K562 (cell line): ENCODE measurements at regions of chr17 and their contacts with region 1.

Region 1: GRCh38 chr17:27601069-27601975 is 29.7 kb upstream of the LGALS9 start:
- DNase-seq: peak; percentile 68 to 88 (median 74)
- ATAC-seq: peak; percentile 48
- H3K4me3 ChIP-seq: no peak overlapping the region
- H3K27ac ChIP-seq: peak overlapping the region; percentile 92
- H3K4me1 ChIP-seq: peaks cover 38 to 48% of the 10 kb centered on the region in 2 experiments
- H3K27me3 ChIP-seq: no peaks in the 10 kb centered on the region
- CTCF ChIP-seq: peak; percentile 87 to 95 (median 94)
- EP300 ChIP-seq: peak; percentile 34; the same call in 1 of the 2 replicates
- POLR2A ChIP-seq: no peak
- RAD21 ChIP-seq: peak; percentile 89 to 91

Region 2: GRCh38 chr17:27236717-27237315 is 364.5 kb before region 1 on chr17:
- CTCF ChIA-PET with region 1: interaction called, 60 read pairs
- POLR2A ChIA-PET with region 1: no interaction called
- in situ Hi-C with region 1: loop called (anchors 10 kb)
- intact Hi-C with region 1: no loop called
- DNase-seq: peak; percentile 69 to 80 (median 74)
- ATAC-seq: peak; percentile 81
- H3K4me3 ChIP-seq: no peak overlapping the region
- H3K27ac ChIP-seq: no peak overlapping the region
- H3K4me1 ChIP-seq: peaks cover 0 to 4% of the 10 kb centered on the region in 2 experiments; a peak in 2 of 5 replicates
- H3K27me3 ChIP-seq: no peaks in the 10 kb centered on the region
- CTCF ChIP-seq: peak; percentile 79 to 91 (median 84)
- EP300 ChIP-seq: no peak
- POLR2A ChIP-seq: no peak
- RAD21 ChIP-seq: peak; percentile 91 to 93

Region 3: GRCh38 chr17:27353461-27354050 is 247.8 kb before region 1 on chr17:
- CTCF ChIA-PET with region 1: interaction called, 27 read pairs
- POLR2A ChIA-PET with region 1: interaction called, 6 read pairs
- in situ Hi-C with region 1: no loop called
- intact Hi-C with region 1: loop called (anchors 1 kb)
- DNase-seq: peak; percentile 97
- ATAC-seq: peak; percentile 92
- H3K4me3 ChIP-seq: peak overlapping the region; percentile 79
- H3K27ac ChIP-seq: peak overlapping the region; percentile 98
- H3K4me1 ChIP-seq: peaks cover 33 to 35% of the 10 kb centered on the region in 2 experiments
- H3K27me3 ChIP-seq: no peaks in the 10 kb centered on the region
- CTCF ChIP-seq: peak; percentile 82 to 97 (median 93)
- EP300 ChIP-seq: peak; percentile 81
- POLR2A ChIP-seq: peak; percentile 91
- RAD21 ChIP-seq: peak; percentile 97

Region 4: GRCh38 chr17:27455914-27456680 is 145.2 kb before region 1 on chr17 and contains the start of gene KSR1:
- CTCF ChIA-PET with region 1: interaction called, 3 read pairs
- POLR2A ChIA-PET with region 1: no interaction called
- in situ Hi-C with region 1: no loop called
- intact Hi-C with region 1: loop called (anchors 1 kb)
- DNase-seq: peak; percentile 91 to 94 (median 92)
- ATAC-seq: peak; percentile 92
- H3K4me3 ChIP-seq: peak within 1 kb of the TSS; percentile 88
- H3K27ac ChIP-seq: peak within 1 kb of the TSS; percentile 58; the same call in 2 of the 3 replicates
- H3K4me1 ChIP-seq: peaks cover 37 to 41% of the 10 kb centered on the region in 2 experiments; a peak in 4 of 5 replicates
- H3K27me3 ChIP-seq: no peaks in the 10 kb centered on the region
- CTCF ChIP-seq: peak; percentile 54 to 64 (median 62)
- EP300 ChIP-seq: no peak
- POLR2A ChIP-seq: peak; percentile 64
- RAD21 ChIP-seq: peak; percentile 56 to 78
- polyA plus RNA-seq, gene KSR1: 1.4 TPM

Region 5: DNA sequence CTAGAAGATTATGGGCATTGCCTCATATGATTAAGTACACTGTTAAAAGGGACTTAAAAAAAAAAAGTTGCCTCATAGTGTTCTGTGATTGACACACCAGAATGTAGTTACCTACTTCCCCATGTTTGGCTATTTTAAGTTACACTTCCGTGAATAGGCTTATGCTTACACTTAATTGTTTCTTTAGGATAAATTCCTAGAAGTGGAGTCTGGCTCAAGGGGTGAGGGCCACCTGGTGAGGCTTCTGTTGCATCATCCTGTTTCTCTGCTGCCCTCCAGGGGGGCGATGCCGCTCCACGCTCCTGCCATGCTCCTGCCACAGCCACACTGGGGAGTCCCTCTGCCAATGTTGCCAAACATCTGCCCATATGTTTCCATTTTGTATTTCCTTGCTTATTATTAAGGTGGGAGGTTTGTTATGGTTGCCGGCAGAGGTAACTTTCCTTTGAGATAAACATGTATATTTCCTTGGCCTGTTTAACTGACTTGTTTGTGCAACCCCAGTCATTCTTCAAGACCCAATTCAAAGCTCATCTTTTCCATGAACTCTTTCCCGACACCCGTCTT is 72.0 kb before region 1 on chr17:
- CTCF ChIA-PET with region 1: no interaction called
- POLR2A ChIA-PET with region 1: no interaction called
- in situ Hi-C with region 1: no loop called
- intact Hi-C with region 1: loop called (anchors 2 kb)
- DNase-seq: peak; percentile 37 to 86 (median 60)
- ATAC-seq: peak; percentile 73
- H3K4me3 ChIP-seq: no peak overlapping the region
- H3K27ac ChIP-seq: peak overlapping the region; percentile 80
- H3K4me1 ChIP-seq: peaks cover 36 to 81% of the 10 kb centered on the region in 2 experiments
- H3K27me3 ChIP-seq: no peaks in the 10 kb centered on the region
- CTCF ChIP-seq: peak in 2 of 3 experiments; percentile 34 to 40; a peak in 3 of 6 replicates
- EP300 ChIP-seq: peak; percentile 93
- POLR2A ChIP-seq: no peak
- RAD21 ChIP-seq: peak; percentile 35 to 56; a peak in 3 of 4 replicates

Region 6: DNA sequence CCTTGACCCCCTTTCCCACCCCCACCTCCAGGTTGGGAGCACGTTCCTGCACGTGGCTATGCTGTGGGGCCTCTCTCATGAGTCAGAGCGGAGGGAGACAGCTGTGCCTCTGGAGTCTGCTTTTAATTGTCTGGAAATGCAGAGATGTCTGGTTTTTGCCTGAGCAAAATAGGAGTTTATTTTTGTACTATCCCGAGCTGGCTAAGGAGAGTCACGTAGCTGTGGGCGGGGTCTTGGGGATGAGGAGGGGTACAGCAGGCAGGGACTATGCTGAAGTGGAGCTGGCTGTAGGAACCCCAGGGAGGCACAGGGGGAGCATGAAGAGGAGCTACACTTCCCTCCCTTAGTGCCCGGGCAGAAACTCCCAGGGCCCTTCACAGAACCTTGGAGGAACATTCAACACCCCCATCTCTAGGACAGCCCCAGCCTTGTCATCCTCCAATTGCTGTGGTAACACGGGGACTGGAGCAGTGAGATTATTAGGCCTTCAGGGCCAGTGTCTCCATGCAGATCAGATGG is 15.1 kb before region 1 on chr17:
- CTCF ChIA-PET with region 1: no interaction called
- POLR2A ChIA-PET with region 1: interaction called, 31 read pairs
- in situ Hi-C with region 1: no loop called
- intact Hi-C with region 1: no loop called
- DNase-seq: no peak
- ATAC-seq: no peak
- H3K4me3 ChIP-seq: no peak overlapping the region
- H3K27ac ChIP-seq: no peak overlapping the region
- H3K4me1 ChIP-seq: peaks cover 16 to 36% of the 10 kb centered on the region in 2 experiments; a peak in 4 of 5 replicates
- H3K27me3 ChIP-seq: no peaks in the 10 kb centered on the region
- CTCF ChIP-seq: no peak
- EP300 ChIP-seq: no peak
- POLR2A ChIP-seq: no peak
- RAD21 ChIP-seq: no peak

Region 7: DNA sequence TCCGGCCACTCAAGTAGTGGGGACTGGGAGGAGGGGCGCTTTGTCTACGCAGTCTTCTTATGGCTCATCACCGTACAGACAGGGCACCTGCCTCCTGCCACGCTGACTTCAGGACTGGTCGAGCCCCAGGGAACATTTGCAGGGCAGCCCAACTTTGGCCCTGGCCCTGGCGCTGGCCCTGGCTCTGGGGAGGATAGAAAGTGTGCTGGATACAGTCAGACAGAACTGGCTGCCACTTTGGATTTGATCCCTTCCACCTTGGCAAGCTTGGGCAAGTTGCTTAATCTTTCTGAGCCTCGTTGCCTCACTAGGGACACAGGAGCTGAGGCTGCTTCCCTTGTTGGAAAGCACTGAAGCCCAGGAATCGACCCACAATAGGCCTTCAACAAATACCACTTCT is 43.3 kb after region 1 on chr17:
- CTCF ChIA-PET with region 1: no interaction called
- POLR2A ChIA-PET with region 1: no interaction called
- in situ Hi-C with region 1: no loop called
- intact Hi-C with region 1: no loop called
- DNase-seq: no peak
- ATAC-seq: no peak
- H3K4me3 ChIP-seq: no peak overlapping the region
- H3K27ac ChIP-seq: no peak overlapping the region
- H3K4me1 ChIP-seq: peaks cover 9 to 20% of the 10 kb centered on the region in 2 experiments; a peak in 4 of 5 replicates
- H3K27me3 ChIP-seq: no peaks in the 10 kb centered on the region
- CTCF ChIP-seq: no peak
- EP300 ChIP-seq: no peak
- POLR2A ChIP-seq: no peak
- RAD21 ChIP-seq: no peak

Region 8: GRCh38 chr17:27760069-27760885 is 159.0 kb after region 1 on chr17:
- CTCF ChIA-PET with region 1: interaction called, 6 read pairs
- POLR2A ChIA-PET with region 1: no interaction called
- in situ Hi-C with region 1: no loop called
- intact Hi-C with region 1: loop called (anchors 2 kb)
- DNase-seq: peak; percentile 63 to 79 (median 70)
- ATAC-seq: peak; percentile 86
- H3K4me3 ChIP-seq: no peak overlapping the region
- H3K27ac ChIP-seq: no peak overlapping the region
- H3K4me1 ChIP-seq: peaks cover 0 to 11% of the 10 kb centered on the region in 2 experiments; a peak in 3 of 5 replicates
- H3K27me3 ChIP-seq: peaks cover 0 to 27% of the 10 kb centered on the region in 2 experiments; a peak in 3 of 5 replicates
- CTCF ChIP-seq: peak; percentile 82 to 95 (median 93)
- EP300 ChIP-seq: no peak
- POLR2A ChIP-seq: no peak
- RAD21 ChIP-seq: peak; percentile 81 to 89